A549 (cell line): ENCODE measurements at regions of chr10 and their contacts with region 1.

Region 1: DNA sequence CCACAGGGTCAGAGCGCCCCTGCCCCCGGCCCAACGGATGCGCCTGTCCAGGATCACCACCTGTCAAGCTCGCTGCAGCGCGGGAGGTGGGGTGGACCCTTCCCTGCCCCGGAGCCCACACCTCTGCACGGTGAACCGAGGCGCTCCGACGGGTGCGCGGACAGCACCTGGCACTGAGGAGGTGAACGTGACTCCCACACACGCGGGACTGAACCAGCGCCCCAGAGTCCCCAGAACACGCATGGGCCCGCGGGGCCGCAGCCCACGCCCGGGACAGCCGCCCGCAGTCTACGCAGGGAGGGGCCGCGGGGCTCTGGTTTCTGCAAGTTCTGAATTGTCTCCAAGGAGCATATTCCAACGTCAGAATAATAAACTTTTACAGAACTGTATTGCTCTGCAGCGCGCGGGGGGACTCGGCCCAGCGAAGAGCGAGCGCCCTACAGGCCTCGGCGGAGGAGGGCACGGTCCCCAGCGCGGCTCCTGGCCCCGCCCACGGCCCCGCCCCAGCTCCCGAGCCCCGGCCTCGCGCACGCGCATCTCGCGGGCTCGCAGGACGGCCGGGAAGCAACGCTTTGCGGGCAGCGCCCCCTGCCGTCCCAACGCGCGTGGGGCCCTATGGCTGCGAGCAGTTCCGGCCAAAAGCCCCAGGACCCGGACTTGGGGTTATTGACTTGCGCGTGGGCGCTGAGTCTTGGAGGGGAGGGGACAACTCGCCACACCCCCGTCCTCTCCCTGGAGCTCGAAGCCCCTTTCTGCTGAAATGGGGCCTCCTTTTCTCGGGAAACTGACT is 29.7 kb downstream of the OAT start:
- DNase-seq: peak; percentile 78 to 88
- ATAC-seq: peak; percentile 90 to 97
- H3K4me3 ChIP-seq: peak overlapping the region; percentile 42
- H3K27ac ChIP-seq: peak overlapping the region; percentile 66 to 84; a peak in 5 of 6 replicates
- H3K4me1 ChIP-seq: no peaks in the 10 kb centered on the region; the same call in 2 of the 3 replicates
- CTCF ChIP-seq: peak; percentile 98
- EP300 ChIP-seq: no peak
- POLR2A ChIP-seq: peak; percentile 28; the same call in 1 of the 2 replicates
- RAD21 ChIP-seq: peak; percentile 93 to 100

Region 2: DNA sequence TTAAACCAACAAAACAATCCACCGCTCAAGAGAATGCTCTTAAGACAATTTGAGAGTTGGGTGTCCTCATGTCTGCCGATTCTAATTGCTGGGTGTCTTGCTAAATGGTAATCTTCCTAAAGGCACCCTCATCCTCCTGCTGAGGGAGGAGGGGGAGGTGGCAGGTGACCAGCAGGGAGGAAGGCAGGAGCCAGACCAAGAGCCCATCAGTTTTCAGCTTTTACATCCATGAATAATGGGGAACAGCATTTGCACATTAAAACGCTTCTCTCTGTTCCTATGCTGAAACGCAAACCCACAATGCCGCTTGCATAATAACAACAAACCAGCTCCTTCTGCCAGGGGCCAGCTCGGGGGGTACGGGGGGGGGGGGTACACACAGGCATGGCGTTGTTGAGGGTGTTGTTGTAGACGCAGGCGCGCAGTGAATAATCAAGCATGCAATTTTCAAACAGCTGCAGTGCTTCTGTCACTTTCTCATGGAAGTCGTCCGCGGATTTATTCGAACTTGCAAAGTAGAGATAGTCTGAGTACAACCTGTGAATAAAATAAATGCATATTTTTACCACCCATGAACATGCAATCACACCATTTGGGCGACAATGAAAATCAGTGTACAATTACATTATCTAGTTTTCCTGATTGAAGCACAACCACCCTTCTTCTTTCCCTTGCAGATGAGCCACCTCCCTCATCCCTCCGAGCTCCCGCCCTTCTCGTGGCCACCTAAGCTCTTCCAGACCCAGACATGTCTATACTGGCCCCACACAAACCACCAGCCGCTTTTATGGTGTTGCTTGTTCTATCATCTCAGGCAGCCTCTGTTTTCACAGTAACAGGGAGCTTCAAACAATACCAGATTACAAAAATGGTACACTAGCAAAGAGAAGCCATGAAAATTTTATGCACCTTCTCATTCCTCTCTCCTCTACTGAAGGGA is 367.9 kb before region 1 on chr10:
- CTCF ChIA-PET with region 1: interaction called, 13 read pairs
- POLR2A ChIA-PET with region 1: no interaction called
- DNase-seq: no peak
- ATAC-seq: no peak
- H3K4me3 ChIP-seq: no peak overlapping the region
- H3K27ac ChIP-seq: no peak overlapping the region
- H3K4me1 ChIP-seq: no peaks in the 10 kb centered on the region
- CTCF ChIP-seq: no peak
- EP300 ChIP-seq: no peak
- POLR2A ChIP-seq: no peak
- RAD21 ChIP-seq: no peak

Region 3: DNA sequence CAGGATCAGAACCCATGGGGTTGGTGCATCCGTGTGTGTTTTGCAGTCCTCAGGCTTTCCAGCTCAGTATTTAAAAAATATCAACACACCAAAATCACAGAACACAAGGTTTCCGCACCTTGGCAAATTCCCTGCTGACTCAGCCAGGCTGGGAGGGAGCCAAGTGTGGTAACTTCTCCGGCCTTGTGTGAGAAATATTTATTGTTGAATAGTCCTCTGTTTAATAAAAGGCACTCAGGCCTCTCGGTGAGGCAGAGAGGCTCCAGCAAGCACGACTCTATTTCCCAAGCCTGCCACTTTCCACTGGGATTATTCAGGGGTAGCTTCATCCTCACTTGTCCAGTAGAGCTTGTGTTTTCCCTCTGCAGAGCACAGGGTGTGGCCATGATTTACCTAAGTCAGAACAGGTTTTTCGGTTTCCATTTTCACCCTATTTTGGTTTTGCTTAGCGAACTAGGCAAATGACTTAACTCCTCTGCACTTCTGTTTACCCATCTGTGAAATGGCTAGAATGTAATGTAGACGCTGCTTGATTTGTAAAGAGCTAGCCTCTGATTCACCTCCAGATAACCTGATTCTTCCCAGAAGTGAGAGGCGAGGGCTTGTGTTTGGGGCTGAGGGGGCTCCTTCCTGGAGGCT is 282.7 kb before region 1 on chr10:
- CTCF ChIA-PET with region 1: interaction called, 11 read pairs
- POLR2A ChIA-PET with region 1: no interaction called
- DNase-seq: peak; percentile 44 to 55
- ATAC-seq: peak; percentile 42 to 71; a peak in 3 of 6 replicates
- H3K4me3 ChIP-seq: no peak overlapping the region
- H3K27ac ChIP-seq: peak overlapping the region; percentile 50 to 80
- H3K4me1 ChIP-seq: peaks cover 27% of the 10 kb centered on the region
- CTCF ChIP-seq: no peak
- EP300 ChIP-seq: no peak
- POLR2A ChIP-seq: no peak
- RAD21 ChIP-seq: peak in 1 of 2 experiments; percentile 5; a peak in 1 of 5 replicates

Region 4: GRCh38 chr10:124336186-124336585 is 52.8 kb before region 1 on chr10:
- CTCF ChIA-PET with region 1: no interaction called
- POLR2A ChIA-PET with region 1: no interaction called
- DNase-seq: no peak
- ATAC-seq: no peak
- H3K4me3 ChIP-seq: no peak overlapping the region
- H3K27ac ChIP-seq: no peak overlapping the region
- H3K4me1 ChIP-seq: no peaks in the 10 kb centered on the region
- CTCF ChIP-seq: no peak
- EP300 ChIP-seq: no peak
- POLR2A ChIP-seq: no peak
- RAD21 ChIP-seq: no peak

Region 5: DNA sequence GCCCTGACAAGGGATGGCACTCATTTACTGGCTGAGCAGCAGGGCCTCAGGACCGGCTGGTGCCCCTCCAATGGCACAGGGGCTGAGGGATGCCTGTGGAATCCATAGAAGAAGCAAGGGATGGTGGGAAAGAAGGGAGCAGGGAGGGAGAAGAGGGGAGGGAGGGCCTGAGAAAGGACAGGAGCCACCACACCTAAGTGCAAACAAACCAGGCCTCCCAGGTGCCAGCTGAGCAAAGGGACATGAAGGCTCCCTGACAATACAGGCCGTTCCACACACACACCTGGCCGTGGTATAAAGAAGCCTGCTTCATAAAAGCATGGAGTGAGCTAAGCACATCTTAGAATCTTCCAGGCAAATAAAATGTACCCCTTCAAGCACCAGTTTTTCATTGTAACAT is 24.4 kb before region 1 on chr10:
- CTCF ChIA-PET with region 1: interaction called, 13 read pairs
- POLR2A ChIA-PET with region 1: no interaction called
- DNase-seq: no peak
- ATAC-seq: no peak
- H3K4me3 ChIP-seq: no peak overlapping the region
- H3K27ac ChIP-seq: no peak overlapping the region
- H3K4me1 ChIP-seq: no peaks in the 10 kb centered on the region
- CTCF ChIP-seq: no peak
- EP300 ChIP-seq: no peak
- POLR2A ChIP-seq: no peak
- RAD21 ChIP-seq: no peak

Region 6: GRCh38 chr10:124403548-124403947 is 14.5 kb after region 1 on chr10:
- CTCF ChIA-PET with region 1: interaction called, 51 read pairs
- POLR2A ChIA-PET with region 1: no interaction called
- DNase-seq: peak; percentile 67 to 86
- ATAC-seq: peak; percentile 100
- H3K4me3 ChIP-seq: no peak overlapping the region
- H3K27ac ChIP-seq: no peak overlapping the region
- H3K4me1 ChIP-seq: no peaks in the 10 kb centered on the region
- CTCF ChIP-seq: peak; percentile 66
- EP300 ChIP-seq: no peak
- POLR2A ChIP-seq: no peak
- RAD21 ChIP-seq: peak; percentile 54 to 66; a peak in 3 of 5 replicates